Sigmoid colon (tissue), 7 donors: ENCODE measurements at regions of chr9 and their contacts with region 1.

Region 1: GRCh38 chr9:96317335-96317980 is 15.5 kb upstream of the HSD17B3 start:
- DNase-seq: peak; percentile 70
- H3K4me3 ChIP-seq: no peak overlapping the region
- H3K27ac ChIP-seq: no peak overlapping the region
- H3K4me1 ChIP-seq: peaks cover 0 to 4% (median 2%) of the 10 kb centered on the region in 4 donors
- H3K27me3 ChIP-seq: no peaks in the 10 kb centered on the region
- CTCF ChIP-seq: peak; percentile 42 to 87 (median 72)
- EP300 ChIP-seq: no peak
- POLR2A ChIP-seq: no peak

Region 2: GRCh38 chr9:95726756-95727155 is 590.7 kb before region 1 on chr9:
- intact Hi-C with region 1: loop called (anchors 10 kb)
- DNase-seq: no peak
- H3K4me3 ChIP-seq: no peak overlapping the region
- H3K27ac ChIP-seq: no peak overlapping the region
- H3K4me1 ChIP-seq: peaks cover 0 to 6% (median 2%) of the 10 kb centered on the region in 4 donors
- H3K27me3 ChIP-seq: no peaks in the 10 kb centered on the region
- CTCF ChIP-seq: peak; percentile 28 to 62 (median 52)
- EP300 ChIP-seq: no peak
- POLR2A ChIP-seq: no peak

Region 3: GRCh38 chr9:96425500-96426169 is 108.2 kb after region 1 on chr9:
- intact Hi-C with region 1: no loop called
- DNase-seq: no peak
- H3K4me3 ChIP-seq: no peak overlapping the region
- H3K27ac ChIP-seq: no peak overlapping the region
- H3K4me1 ChIP-seq: peaks cover 0 to 7% (median 6%) of the 10 kb centered on the region in 4 donors
- H3K27me3 ChIP-seq: no peaks in the 10 kb centered on the region
- CTCF ChIP-seq: no peak
- EP300 ChIP-seq: no peak
- POLR2A ChIP-seq: no peak